Breast epithelium (tissue), 4 donors: ENCODE measurements at regions of chr4 and their contacts with region 1.

Region 1: GRCh38 chr4:184544788-184545409 is 70.5 kb upstream of the IRF2 start:
- DNase-seq: no peak
- H3K4me3 ChIP-seq: no peak overlapping the region
- H3K27ac ChIP-seq: no peak overlapping the region
- H3K4me1 ChIP-seq: no peaks in the 10 kb centered on the region
- H3K27me3 ChIP-seq: no peaks in the 10 kb centered on the region
- CTCF ChIP-seq: no peak
- POLR2A ChIP-seq: no peak

Region 2: GRCh38 chr4:182764137-182764536 is 1780.8 kb before region 1 on chr4:
- intact Hi-C with region 1: loop called (anchors 10 kb)
- DNase-seq: no peak
- H3K4me3 ChIP-seq: no peak overlapping the region
- H3K27ac ChIP-seq: no peak overlapping the region
- H3K4me1 ChIP-seq: no peaks in the 10 kb centered on the region
- H3K27me3 ChIP-seq: no peaks in the 10 kb centered on the region
- CTCF ChIP-seq: no peak
- POLR2A ChIP-seq: no peak

Region 3: GRCh38 chr4:184293552-184293951 is 251.3 kb before region 1 on chr4:
- intact Hi-C with region 1: loop called (anchors 10 kb)
- DNase-seq: peak in 1 of 2 donors; percentile 54
- H3K4me3 ChIP-seq: no peak overlapping the region
- H3K27ac ChIP-seq: peak overlapping the region; percentile 20 to 79
- H3K4me1 ChIP-seq: no peaks in the 10 kb centered on the region
- H3K27me3 ChIP-seq: no peaks in the 10 kb centered on the region
- CTCF ChIP-seq: no peak
- POLR2A ChIP-seq: no peak

Region 4: GRCh38 chr4:184575306-184575705 is 30.4 kb after region 1 on chr4:
- intact Hi-C with region 1: no loop called
- DNase-seq: no peak
- H3K4me3 ChIP-seq: no peak overlapping the region
- H3K27ac ChIP-seq: no peak overlapping the region
- H3K4me1 ChIP-seq: no peaks in the 10 kb centered on the region
- H3K27me3 ChIP-seq: no peaks in the 10 kb centered on the region
- CTCF ChIP-seq: no peak
- POLR2A ChIP-seq: no peak

Region 5: GRCh38 chr4:184587701-184588100 is 42.8 kb after region 1 on chr4:
- intact Hi-C with region 1: no loop called
- DNase-seq: no peak
- H3K4me3 ChIP-seq: no peak overlapping the region
- H3K27ac ChIP-seq: no peak overlapping the region
- H3K4me1 ChIP-seq: no peaks in the 10 kb centered on the region
- H3K27me3 ChIP-seq: no peaks in the 10 kb centered on the region
- CTCF ChIP-seq: no peak
- POLR2A ChIP-seq: no peak